Activated CD4-positive, alpha-beta memory T cell treated with anti-CD3 and anti-CD28 coated beads for 36 hours (primary cell): ENCODE measurements at regions of chr9 and their contacts with region 1.

Region 1: GRCh38 chr9:123929870-123930831 is at the start of gene DENND1A:
- DNase-seq: peak; percentile 94
- H3K4me3 Mint-ChIP-seq: peak within 1 kb of the TSS; percentile 81
- H3K27ac Mint-ChIP-seq: peak within 1 kb of the TSS; percentile 65
- H3K4me1 Mint-ChIP-seq: peaks cover 32% of the 10 kb centered on the region
- H3K27me3 Mint-ChIP-seq: peaks cover 4% of the 10 kb centered on the region
- total RNA-seq, gene DENND1A: 17.3 to 18.0 TPM

Region 2: GRCh38 chr9:123544007-123544827 is 385.9 kb before region 1 on chr9:
- CTCF ChIA-PET with region 1: interaction called, 3 read pairs
- POLR2A ChIA-PET with region 1: no interaction called
- intact Hi-C with region 1: loop called (anchors 5 kb)
- DNase-seq: peak; percentile 19
- H3K4me3 Mint-ChIP-seq: no peak overlapping the region
- H3K27ac Mint-ChIP-seq: no peak overlapping the region
- H3K4me1 Mint-ChIP-seq: peaks cover 8% of the 10 kb centered on the region
- H3K27me3 Mint-ChIP-seq: no peaks in the 10 kb centered on the region

Region 3: DNA sequence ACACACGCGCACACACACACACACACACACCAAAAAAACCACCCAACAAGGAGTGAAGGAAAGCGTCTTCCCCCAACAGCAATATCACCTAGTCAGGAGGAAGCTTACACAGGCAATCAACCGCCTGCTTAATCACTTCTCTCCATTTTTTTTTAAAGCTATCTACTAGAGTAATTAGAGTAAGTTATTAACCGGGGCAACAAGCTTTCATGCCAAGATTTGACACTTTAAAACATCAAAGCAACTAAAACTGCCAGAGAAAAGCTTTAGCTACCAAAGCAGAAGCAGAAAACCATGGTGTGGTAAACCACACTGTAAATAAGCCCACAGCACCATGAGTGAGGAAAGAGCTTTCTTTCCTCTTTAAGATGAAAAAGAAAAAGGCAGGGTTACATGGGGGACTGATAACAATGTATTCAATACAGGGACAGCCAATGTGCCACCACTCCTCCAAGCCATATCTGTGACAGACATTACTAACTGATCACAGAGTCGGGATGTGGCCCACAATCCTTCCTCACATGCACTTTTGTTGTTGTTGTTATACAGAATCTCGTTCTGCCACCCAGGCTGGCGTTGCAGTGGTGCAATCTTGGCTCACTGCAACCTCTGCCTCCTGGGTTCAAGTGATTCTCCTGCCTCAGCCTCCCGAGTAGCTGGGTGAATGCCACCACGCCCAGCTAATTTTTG is 292.1 kb before region 1 on chr9:
- CTCF ChIA-PET with region 1: no interaction called
- POLR2A ChIA-PET with region 1: no interaction called
- intact Hi-C with region 1: loop called (anchors 5 kb)
- DNase-seq: peak; percentile 15
- H3K4me3 Mint-ChIP-seq: peak overlapping the region; percentile 27
- H3K27ac Mint-ChIP-seq: no peak overlapping the region
- H3K4me1 Mint-ChIP-seq: peaks cover 44% of the 10 kb centered on the region
- H3K27me3 Mint-ChIP-seq: no peaks in the 10 kb centered on the region

Region 4: GRCh38 chr9:123679322-123679987 is 250.7 kb before region 1 on chr9:
- CTCF ChIA-PET with region 1: no interaction called
- POLR2A ChIA-PET with region 1: no interaction called
- intact Hi-C with region 1: no loop called
- DNase-seq: peak; percentile 31
- H3K4me3 Mint-ChIP-seq: no peak overlapping the region
- H3K27ac Mint-ChIP-seq: no peak overlapping the region
- H3K4me1 Mint-ChIP-seq: peaks cover 22% of the 10 kb centered on the region
- H3K27me3 Mint-ChIP-seq: no peaks in the 10 kb centered on the region

Region 5: GRCh38 chr9:123894822-123895221 is 35.3 kb before region 1 on chr9:
- CTCF ChIA-PET with region 1: no interaction called
- POLR2A ChIA-PET with region 1: no interaction called
- intact Hi-C with region 1: no loop called
- DNase-seq: no peak
- H3K4me3 Mint-ChIP-seq: no peak overlapping the region
- H3K27ac Mint-ChIP-seq: no peak overlapping the region
- H3K4me1 Mint-ChIP-seq: peaks cover 8% of the 10 kb centered on the region
- H3K27me3 Mint-ChIP-seq: no peaks in the 10 kb centered on the region

Region 6: DNA sequence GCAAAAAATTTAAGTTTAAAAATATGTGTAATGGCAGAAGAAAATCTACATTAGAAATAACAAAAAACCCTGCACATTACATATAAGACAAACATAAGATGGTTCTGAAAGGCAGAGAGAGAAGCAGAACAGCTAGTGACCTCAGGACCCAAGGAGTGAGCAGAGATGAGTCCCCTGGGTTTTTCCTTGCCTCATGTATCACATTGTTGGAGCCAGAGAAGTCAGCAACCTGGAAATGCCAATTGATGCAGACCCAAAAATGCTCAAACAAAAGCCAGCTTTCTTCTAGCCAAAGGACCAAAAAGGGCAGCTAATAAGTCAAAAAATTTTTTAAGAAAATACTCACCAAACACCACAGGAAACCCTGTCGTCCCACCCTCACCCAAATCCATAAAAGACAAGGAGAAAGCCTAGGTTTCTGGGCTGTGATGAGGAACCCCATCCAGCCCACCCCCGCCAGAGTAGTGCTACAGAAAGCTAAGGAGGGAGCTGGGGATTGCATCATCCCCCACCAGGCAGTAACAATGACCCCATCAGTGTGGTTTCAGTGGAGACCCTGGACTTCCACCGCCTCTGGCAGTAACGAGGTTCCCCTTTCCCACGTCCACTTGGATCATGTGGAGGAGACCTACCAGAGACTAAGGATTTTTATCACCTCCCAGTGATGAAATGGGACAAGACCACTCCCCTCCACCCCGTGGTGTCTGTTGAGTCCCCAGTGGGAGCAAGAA is 17.8 kb before region 1 on chr9:
- CTCF ChIA-PET with region 1: no interaction called
- POLR2A ChIA-PET with region 1: no interaction called
- intact Hi-C with region 1: no loop called
- DNase-seq: no peak
- H3K4me3 Mint-ChIP-seq: no peak overlapping the region
- H3K27ac Mint-ChIP-seq: no peak overlapping the region
- H3K4me1 Mint-ChIP-seq: peaks cover 8% of the 10 kb centered on the region
- H3K27me3 Mint-ChIP-seq: no peaks in the 10 kb centered on the region

Region 7: GRCh38 chr9:123997665-123998277 is 67.6 kb after region 1 on chr9:
- CTCF ChIA-PET with region 1: no interaction called
- POLR2A ChIA-PET with region 1: no interaction called
- intact Hi-C with region 1: loop called (anchors 5 kb)
- DNase-seq: peak; percentile 58
- H3K4me3 Mint-ChIP-seq: peak overlapping the region; percentile 23
- H3K27ac Mint-ChIP-seq: no peak overlapping the region
- H3K4me1 Mint-ChIP-seq: peaks cover 37% of the 10 kb centered on the region
- H3K27me3 Mint-ChIP-seq: peaks cover 70% of the 10 kb centered on the region

Region 8: DNA sequence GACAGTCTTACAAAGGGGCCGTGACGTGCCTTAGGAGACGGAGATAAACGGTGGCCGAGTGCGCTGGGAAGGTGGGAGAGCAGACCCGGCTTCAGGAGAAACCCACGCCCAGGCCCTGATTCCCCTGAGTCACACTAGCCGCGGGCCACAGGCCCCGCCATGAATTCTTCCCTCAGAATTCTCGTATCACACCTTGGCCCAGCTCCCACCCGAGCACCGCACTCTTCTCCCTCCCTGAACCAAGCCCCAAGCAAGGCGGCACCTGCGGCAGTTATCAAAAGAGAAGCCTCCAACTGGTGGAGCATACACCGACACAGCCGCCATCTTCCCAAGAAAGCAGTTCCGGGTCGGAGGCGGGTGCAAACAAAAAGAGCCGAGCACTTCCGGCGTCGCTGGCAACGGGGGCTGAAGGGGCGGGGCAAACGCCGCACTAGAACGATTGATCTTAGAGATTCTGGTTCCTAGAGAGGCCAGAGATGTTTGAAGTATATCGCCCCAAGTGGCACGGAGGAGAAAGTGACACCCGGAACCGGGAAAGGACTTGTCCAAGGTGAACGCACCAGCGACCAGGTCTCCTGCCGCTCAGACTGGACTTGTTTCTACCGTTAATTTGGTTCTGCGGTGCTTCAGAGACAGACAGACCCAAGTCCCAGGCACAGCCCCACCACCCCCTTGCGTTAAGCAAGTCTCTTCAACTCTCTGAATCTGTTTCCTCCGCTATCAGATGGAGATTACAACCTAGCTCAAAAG is 485.1 kb after region 1 on chr9 and contains the start of gene PSMB7:
- CTCF ChIA-PET with region 1: no interaction called
- POLR2A ChIA-PET with region 1: no interaction called
- intact Hi-C with region 1: loop called (anchors 10 kb)
- DNase-seq: peak; percentile 98
- H3K4me3 Mint-ChIP-seq: peak within 1 kb of the TSS; percentile 100
- H3K27ac Mint-ChIP-seq: peak within 1 kb of the TSS; percentile 90
- H3K4me1 Mint-ChIP-seq: peaks cover 34% of the 10 kb centered on the region
- H3K27me3 Mint-ChIP-seq: no peaks in the 10 kb centered on the region
- total RNA-seq, gene PSMB7: 156 TPM